ENCODE measurements at regions of chr10 and their contacts with region 1.

Region 1: GRCh38 chr10:59808896-59809643 is 55.8 kb upstream of the MRLN start:
- DNase-seq: peak; percentile 81
- ATAC-seq: peak; percentile 89
- H3K4me3 Mint-ChIP-seq: no peak overlapping the region
- H3K27ac Mint-ChIP-seq: no peak overlapping the region
- H3K4me1 Mint-ChIP-seq: no peaks in the 10 kb centered on the region
- H3K27me3 Mint-ChIP-seq: no peaks in the 10 kb centered on the region

Region 2: GRCh38 chr10:59625721-59626522 is 183.1 kb before region 1 on chr10:
- CTCF ChIA-PET with region 1: interaction called, 50 read pairs
- POLR2A ChIA-PET with region 1: no interaction called
- DNase-seq: peak; percentile 56
- ATAC-seq: peak; percentile 91
- H3K4me3 Mint-ChIP-seq: no peak overlapping the region
- H3K27ac Mint-ChIP-seq: no peak overlapping the region
- H3K4me1 Mint-ChIP-seq: no peaks in the 10 kb centered on the region
- H3K27me3 Mint-ChIP-seq: peaks cover 2% of the 10 kb centered on the region

Region 3: GRCh38 chr10:59719374-59719773 is 89.7 kb before region 1 on chr10:
- CTCF ChIA-PET with region 1: no interaction called
- POLR2A ChIA-PET with region 1: no interaction called
- DNase-seq: no peak
- ATAC-seq: no peak
- H3K4me3 Mint-ChIP-seq: no peak overlapping the region
- H3K27ac Mint-ChIP-seq: no peak overlapping the region
- H3K4me1 Mint-ChIP-seq: no peaks in the 10 kb centered on the region
- H3K27me3 Mint-ChIP-seq: peaks cover 26% of the 10 kb centered on the region

Region 4: GRCh38 chr10:59819265-59819664 is 10.2 kb after region 1 on chr10:
- CTCF ChIA-PET with region 1: interaction called, 12 read pairs
- POLR2A ChIA-PET with region 1: no interaction called
- DNase-seq: no peak
- ATAC-seq: no peak
- H3K4me3 Mint-ChIP-seq: no peak overlapping the region
- H3K27ac Mint-ChIP-seq: no peak overlapping the region
- H3K4me1 Mint-ChIP-seq: peaks cover 9% of the 10 kb centered on the region
- H3K27me3 Mint-ChIP-seq: no peaks in the 10 kb centered on the region

Region 5: GRCh38 chr10:59839588-59839987 is 30.5 kb after region 1 on chr10:
- CTCF ChIA-PET with region 1: no interaction called
- POLR2A ChIA-PET with region 1: no interaction called
- DNase-seq: no peak
- ATAC-seq: no peak
- H3K4me3 Mint-ChIP-seq: no peak overlapping the region
- H3K27ac Mint-ChIP-seq: no peak overlapping the region
- H3K4me1 Mint-ChIP-seq: no peaks in the 10 kb centered on the region
- H3K27me3 Mint-ChIP-seq: no peaks in the 10 kb centered on the region

Measured in activated CD8-positive, alpha-beta T cell treated with anti-CD3 and anti-CD28 coated beads, Interleukin-2, amount 10 ng/mL, durations not matched to agents 7 days and 5 days (primary cell).